ENCODE measurements at regions of chr12 and their contacts with region 1.

Region 1: GRCh38 chr12:1566449-1567135 is 27.8 kb downstream of the FBXL14 start:
- DNase-seq: no peak
- H3K4me3 ChIP-seq: no peak overlapping the region
- CTCF ChIP-seq: no peak

Region 2: GRCh38 chr12:1481326-1481725 is 85.3 kb before region 1 on chr12:
- in situ Hi-C with region 1: loop called (anchors 5 kb)
- DNase-seq: no peak
- H3K4me3 ChIP-seq: no peak overlapping the region
- CTCF ChIP-seq: no peak

Region 3: DNA sequence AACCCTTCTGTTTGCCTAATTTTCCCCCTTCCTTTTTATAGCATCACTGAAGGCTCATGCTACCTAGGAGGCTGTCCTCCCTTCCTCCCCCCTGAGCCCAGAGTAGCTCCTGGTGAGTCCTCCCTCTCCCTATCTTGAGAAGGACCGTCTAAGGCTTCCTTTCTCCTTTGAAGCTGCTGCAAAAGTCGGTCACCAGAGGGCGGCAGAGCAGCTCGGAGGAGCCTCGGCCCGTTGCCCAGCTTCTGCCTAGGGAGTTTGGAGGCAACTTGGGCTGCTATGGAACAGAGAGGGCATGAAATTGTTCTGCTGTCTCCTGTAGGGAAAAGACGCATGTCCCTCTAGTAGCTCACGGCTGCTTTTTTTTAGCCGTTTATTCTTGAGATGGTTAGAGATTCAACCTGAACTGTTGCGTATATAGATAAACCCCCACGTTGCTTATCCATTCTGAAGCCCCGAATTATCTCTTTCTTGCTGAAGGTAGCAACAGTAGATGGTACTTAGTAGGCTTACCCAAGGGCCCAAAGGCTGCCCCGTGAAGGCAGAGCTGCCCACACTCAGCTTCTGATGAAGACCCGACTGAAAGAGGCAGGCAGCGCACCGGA is 68.1 kb after region 1 on chr12:
- in situ Hi-C with region 1: no loop called
- DNase-seq: peak; percentile 71
- H3K4me3 ChIP-seq: no peak overlapping the region
- CTCF ChIP-seq: peak; percentile 97